Cardiac septum (tissue), 1 donor: ENCODE measurements at regions of chr9 and their contacts with region 1.

Region 1: DNA sequence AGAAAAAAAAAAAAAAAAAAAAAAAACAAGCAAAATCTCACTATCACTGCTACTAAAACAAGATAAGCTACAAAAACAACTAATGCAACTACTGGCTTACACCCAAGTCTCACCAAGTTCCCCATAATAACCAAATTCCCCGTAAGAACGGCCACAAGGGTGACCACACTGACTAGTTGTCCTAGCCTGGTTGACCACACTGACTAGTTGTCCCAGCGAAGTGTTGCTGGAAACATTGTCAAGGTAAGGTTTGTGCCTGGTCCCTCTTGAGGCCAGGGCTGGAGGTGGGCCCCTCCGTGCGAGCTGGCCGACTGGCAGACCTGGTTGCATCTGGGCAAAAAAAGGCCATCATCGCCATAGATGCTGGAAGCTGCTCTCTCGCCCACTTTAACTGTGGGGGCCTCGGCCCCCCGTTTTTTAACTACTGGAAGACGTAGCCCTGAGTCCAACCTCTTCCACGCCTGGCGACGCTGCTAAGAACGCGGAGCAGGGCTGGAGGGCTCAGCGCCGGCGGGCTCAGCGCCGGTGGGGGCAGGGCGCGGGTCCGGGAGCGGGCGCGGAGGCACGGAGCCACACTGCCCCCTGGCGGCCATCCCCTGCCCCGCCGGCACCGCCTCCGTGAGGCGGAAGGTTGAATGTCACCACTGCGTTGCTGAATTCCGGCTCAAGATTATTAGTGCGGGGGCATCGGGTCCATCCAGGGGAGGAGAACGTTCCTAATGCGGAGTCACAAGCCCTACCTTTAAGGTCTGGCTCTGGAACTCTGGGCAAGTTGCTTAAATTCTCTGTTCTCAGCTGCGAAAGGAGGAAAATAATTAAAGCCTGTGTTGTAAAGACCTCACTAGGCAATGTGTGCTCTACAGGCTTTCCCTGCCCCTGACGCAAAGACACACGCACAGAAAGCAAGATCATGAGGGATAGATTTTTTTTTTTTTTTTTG is 84.0 kb downstream of the HSD17B3 start:
- DNase-seq: peak; percentile 85

Region 2: DNA sequence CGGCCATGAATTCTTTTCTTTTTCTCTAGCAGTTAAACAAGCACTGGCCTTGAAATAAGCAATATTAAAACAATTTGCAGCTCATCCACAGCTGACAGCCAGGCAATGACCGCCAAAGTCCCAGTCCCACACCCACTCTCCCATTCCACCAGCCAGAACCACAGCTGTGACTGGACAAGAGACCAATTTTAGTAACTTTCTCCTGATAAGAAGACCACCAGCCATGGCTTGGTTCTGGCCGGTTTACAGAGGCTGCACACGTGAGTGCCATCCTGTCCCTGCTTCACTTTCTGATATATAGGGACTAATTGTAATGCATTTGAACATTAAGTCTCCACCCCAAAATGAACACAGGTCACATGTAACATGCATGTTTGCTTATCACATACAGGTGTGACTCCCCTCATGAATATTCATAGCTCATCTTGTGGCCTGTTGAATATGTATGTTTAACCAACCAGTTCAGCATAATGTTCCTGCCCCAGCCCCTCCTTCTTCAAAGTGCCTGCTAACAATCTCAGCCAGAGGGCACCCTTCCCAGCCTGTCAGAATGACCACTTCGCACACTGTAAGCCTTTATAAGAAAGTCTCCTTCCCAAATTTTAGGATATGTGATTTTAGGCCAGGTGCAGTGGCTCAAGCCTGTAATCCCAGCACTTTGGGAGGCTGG is 876.6 kb before region 1 on chr9:
- intact Hi-C with region 1: loop called (anchors 10 kb)
- DNase-seq: no peak

Region 3: GRCh38 chr9:96256800-96257199 is 38.8 kb after region 1 on chr9:
- intact Hi-C with region 1: no loop called
- DNase-seq: no peak

Region 4: DNA sequence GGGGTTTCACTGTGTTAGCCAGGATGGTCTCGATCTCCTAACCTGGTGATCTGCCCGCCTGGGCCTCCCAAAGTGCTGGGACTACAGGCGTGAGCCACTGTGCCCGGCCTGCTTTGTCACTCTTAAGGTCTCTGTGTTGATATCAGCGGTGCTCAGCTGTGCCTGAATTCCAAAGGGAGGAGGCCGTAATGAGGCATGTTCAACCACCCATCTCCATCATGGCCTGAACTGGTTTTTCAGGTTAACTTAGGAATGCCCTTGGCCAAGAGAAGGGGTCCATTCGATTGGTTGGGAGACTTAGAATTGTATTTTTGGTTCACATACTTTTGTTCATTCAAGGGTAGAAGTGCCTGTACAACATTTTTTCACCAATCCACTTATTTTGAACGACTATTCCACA is 61.9 kb after region 1 on chr9:
- intact Hi-C with region 1: no loop called
- DNase-seq: no peak

Region 5: GRCh38 chr9:96363175-96363967 is 145.3 kb after region 1 on chr9:
- intact Hi-C with region 1: no loop called
- DNase-seq: no peak